ENCODE measurements at regions of chr6 and their contacts with region 1.

Region 1: GRCh38 chr6:41066867-41067304 is 5.3 kb downstream of the OARD1 start:
- DNase-seq: peak; percentile 87
- H3K4me3 Mint-ChIP-seq: no peak overlapping the region
- H3K27ac Mint-ChIP-seq: peak overlapping the region; percentile 40
- H3K4me1 Mint-ChIP-seq: peaks cover 42% of the 10 kb centered on the region
- H3K27me3 Mint-ChIP-seq: no peaks in the 10 kb centered on the region

Region 2: DNA sequence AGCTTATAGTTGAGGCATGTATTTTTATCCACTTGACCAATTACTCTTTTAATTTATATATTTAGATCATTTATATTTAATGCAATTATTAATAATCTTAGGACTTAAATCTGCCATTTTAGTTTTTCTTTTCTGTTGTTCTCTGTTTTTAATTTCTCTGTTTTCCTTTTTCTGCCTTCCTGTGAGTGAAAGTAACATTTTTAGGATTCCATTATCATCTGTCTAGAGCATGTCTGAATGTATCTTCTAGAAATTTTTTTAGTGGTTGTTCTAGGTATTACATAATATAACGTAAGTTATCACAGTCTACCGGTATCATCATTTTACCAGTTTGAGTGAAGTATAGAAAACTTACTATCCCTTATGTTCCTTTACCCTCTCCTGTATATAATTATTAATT is 225.2 kb before region 1 on chr6:
- intact Hi-C with region 1: no loop called
- DNase-seq: no peak
- H3K4me3 Mint-ChIP-seq: no peak overlapping the region
- H3K27ac Mint-ChIP-seq: no peak overlapping the region
- H3K4me1 Mint-ChIP-seq: no peaks in the 10 kb centered on the region
- H3K27me3 Mint-ChIP-seq: peaks cover 46% of the 10 kb centered on the region

Region 3: GRCh38 chr6:40978687-40979289 is 88.1 kb before region 1 on chr6:
- intact Hi-C with region 1: no loop called
- DNase-seq: no peak
- H3K4me3 Mint-ChIP-seq: no peak overlapping the region
- H3K27ac Mint-ChIP-seq: no peak overlapping the region
- H3K4me1 Mint-ChIP-seq: no peaks in the 10 kb centered on the region
- H3K27me3 Mint-ChIP-seq: peaks cover 64% of the 10 kb centered on the region

Region 4: GRCh38 chr6:41002216-41002615 is 64.7 kb before region 1 on chr6:
- intact Hi-C with region 1: loop called (anchors 1 kb)
- DNase-seq: no peak
- H3K4me3 Mint-ChIP-seq: no peak overlapping the region
- H3K27ac Mint-ChIP-seq: no peak overlapping the region
- H3K4me1 Mint-ChIP-seq: peaks cover 6% of the 10 kb centered on the region
- H3K27me3 Mint-ChIP-seq: peaks cover 53% of the 10 kb centered on the region

Region 5: GRCh38 chr6:41159415-41160082 is 92.7 kb after region 1 on chr6:
- intact Hi-C with region 1: no loop called
- DNase-seq: peak; percentile 37
- H3K4me3 Mint-ChIP-seq: no peak overlapping the region
- H3K27ac Mint-ChIP-seq: no peak overlapping the region
- H3K4me1 Mint-ChIP-seq: no peaks in the 10 kb centered on the region
- H3K27me3 Mint-ChIP-seq: peaks cover 17% of the 10 kb centered on the region

Measured in activated CD4-positive, alpha-beta T cell treated with anti-CD3 and anti-CD28 coated beads, Interleukin-2, amount 10 ng/mL, durations not matched to agents 24 days and 14 days (primary cell).